ENCODE measurements at regions of chr9 and their contacts with region 1.

Region 1: DNA sequence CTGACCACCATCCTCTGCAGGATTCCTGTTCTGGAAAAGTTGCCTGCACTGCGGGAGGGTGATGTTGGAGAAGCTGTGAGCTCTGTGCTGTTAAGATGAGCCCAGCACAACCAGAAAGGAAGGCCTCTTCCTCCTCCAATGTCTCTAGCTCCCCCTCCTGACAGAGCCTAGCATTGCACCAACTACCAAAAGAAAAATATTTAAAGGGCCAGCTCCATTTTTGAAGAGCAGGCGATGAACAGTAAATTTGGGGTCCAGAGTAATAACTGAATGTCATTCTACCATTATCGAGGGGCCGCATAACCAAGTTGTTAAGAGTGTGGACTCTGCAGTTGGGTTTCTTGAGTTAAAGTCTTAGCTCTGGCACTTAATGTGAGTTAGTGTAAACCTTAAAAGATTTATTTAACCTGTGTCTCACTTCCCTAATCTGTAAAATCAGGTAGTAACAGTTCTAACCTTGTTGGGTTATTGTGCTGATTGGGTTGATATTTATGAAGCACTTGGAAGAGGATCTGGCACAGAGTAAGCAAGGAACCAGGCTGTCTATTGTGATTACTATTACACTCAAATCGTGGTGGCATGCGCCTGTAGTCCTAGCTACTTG is 3.9 kb downstream of the TEX53 start:
- DNase-seq: peak in 2 of 3 donors; percentile 40 to 91
- ATAC-seq: peak; percentile 97
- H3K4me3 ChIP-seq: no peak overlapping the region
- H3K4me1 ChIP-seq: no peaks in the 10 kb centered on the region
- CTCF ChIP-seq: peak; percentile 81

Region 2: GRCh38 chr9:114339130-114339908 is 314.3 kb before region 1 on chr9:
- intact Hi-C with region 1: loop called in 1 of 2 experiments (anchors 10 kb)
- DNase-seq: peak in 2 of 3 donors; percentile 58 to 62
- ATAC-seq: peak; percentile 58
- H3K4me3 ChIP-seq: no peak overlapping the region
- H3K4me1 ChIP-seq: no peaks in the 10 kb centered on the region
- CTCF ChIP-seq: peak; percentile 42

Region 3: DNA sequence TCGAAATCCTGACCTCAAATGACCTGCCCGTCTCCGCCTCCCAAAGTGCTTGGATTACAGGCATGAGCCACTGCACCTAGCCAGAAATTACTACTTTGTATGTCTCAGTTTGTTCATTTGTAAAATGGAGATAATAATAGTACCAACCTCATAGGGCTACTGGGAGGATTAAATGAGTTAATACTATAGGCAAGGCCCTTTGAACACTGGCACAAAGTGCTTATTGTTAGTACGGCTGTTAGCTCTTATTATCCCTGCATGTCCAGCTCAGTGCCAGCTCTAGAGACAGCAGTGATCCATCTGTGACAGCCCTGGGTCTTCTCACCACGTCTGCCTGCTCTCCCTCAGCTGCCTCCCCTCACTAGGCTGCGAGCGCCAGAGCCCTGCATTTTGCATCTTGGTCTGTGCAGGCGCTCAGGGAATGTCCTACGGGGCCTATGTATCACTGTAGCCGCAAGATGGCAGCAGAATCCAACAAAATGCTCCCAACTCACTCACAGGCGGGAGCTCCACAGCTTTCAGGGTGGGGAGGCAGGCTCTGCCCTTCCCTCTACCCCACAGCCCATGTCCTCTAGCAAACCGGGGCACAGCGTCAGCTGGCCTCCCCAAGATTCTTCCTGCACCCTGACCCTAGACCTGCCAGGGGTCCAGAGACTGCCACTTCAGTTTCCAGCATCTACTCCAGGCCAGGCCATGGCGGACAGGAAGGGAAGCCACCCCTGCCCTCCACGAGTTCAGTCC is 248.2 kb before region 1 on chr9:
- intact Hi-C with region 1: loop called (anchors 5 kb)
- DNase-seq: peak; percentile 72 to 88 (median 76)
- ATAC-seq: peak; percentile 82
- H3K4me3 ChIP-seq: no peak overlapping the region
- H3K4me1 ChIP-seq: peaks cover 17% of the 10 kb centered on the region
- CTCF ChIP-seq: peak; percentile 67

Region 4: GRCh38 chr9:114487607-114488300 is 165.9 kb before region 1 on chr9:
- intact Hi-C with region 1: loop called (anchors 1 to 2 kb)
- DNase-seq: peak in 2 of 3 donors; percentile 46 to 89
- ATAC-seq: peak; percentile 95
- H3K4me3 ChIP-seq: no peak overlapping the region
- H3K4me1 ChIP-seq: no peaks in the 10 kb centered on the region
- CTCF ChIP-seq: peak; percentile 89

Region 5: DNA sequence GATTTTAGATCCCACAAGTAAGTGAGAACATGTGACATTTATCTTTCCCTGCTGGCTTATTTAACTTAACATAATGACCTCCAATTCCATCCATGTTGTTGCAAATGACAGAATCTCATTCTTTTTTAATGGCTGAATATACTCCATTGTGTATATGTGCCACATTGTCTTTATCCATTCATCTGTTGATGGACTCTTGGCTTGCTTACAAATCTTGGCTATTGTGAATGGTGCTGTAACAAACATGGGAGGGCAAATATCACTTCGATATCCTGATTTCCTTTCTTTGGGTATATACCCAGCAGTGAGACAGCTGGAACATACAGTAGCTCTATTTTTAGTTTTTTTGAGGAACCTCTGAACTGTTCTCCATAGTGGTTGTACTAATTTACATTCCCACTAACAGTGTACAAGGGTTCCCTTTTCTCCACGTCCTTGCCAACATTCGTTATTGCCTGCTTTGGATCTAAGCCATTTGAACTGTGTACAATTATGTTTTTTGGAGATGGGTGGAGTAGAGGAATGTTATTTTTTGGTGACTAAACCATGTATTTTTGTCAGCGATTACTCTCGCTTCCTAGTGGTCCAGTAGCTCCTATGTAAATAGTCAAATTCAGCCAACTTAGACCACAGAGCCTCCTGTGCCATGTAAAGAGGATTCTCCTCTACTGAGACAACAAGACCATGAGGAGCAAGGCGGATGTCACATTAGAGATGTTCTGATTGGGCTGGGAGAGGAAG is 91.6 kb after region 1 on chr9:
- intact Hi-C with region 1: no loop called
- DNase-seq: no peak
- ATAC-seq: no peak
- H3K4me3 ChIP-seq: no peak overlapping the region
- H3K4me1 ChIP-seq: no peaks in the 10 kb centered on the region
- CTCF ChIP-seq: no peak

Measured in mucosa of descending colon (tissue), 3 donors.